Motor neuron (in vitro differentiated cells): ENCODE measurements at regions of chr6 and their contacts with region 1.

Region 1: DNA sequence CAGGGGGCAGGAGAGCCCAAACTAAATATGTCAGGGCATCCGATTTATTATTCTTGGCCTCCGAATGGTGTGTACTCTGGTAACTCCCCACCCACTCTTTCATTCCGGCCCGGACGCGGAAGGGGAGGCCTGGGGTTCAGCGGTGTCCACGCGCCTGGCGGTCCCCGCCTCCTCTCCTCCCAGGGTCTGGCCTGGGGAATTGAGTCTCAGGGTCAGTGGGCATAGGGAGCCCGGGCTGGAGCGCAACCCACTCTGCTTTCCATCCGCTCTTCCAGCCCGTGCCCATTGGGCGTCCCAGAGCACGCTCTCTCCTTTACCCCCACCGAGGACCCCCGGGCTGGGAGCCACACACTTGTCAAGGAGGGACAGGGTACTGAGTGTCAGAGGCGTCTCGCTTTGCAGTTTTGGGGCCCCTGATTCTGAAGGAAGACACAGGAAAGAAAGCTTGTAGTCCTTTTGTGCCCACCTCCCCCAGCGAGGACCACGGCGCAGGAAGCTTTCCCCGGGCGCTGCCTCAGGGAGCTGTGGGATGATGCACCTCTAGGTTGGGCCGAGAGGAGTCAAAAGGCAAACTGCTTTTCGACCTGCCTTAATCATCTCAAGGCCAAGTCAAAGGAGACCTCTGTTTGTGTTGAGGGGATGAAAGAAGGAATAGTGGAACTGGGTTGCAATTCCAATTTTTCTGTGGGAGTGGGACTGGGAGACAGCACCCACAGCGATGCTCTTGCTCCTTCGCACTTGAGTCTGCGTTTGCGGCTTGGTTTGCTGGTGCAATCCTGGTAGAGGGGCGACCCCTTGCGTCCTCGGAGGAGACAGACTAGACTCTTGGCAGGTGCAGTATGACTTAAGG is 2.5 kb downstream of the RSPO3 start:
- ATAC-seq: peak; percentile 75 to 84 (median 81)
- H3K4me3 ChIP-seq: peak overlapping the region; percentile 2 to 55 (median 44)
- H3K27ac ChIP-seq: no peak overlapping the region
- H3K4me1 ChIP-seq: peaks cover 9 to 13% of the 10 kb centered on the region in 2 donors

Region 2: DNA sequence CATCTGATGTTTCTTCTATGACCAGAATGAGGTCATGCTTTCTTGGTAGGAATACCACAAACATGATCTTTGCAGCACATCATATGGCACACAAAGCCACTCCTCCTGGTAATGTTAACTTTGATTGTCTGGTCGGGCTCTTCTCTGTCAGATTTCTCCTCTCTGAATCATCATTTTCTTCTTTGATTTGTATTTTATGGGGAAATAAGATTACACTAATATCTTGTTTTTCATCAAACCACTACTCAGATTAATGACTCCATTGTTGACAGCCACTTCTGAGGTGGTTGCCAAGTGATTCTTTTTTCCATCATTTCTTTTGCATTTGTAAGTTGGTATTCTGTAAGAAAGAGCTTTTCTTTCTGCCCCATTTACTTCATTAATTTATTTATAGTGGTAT is 1105.1 kb before region 1 on chr6:
- in situ Hi-C with region 1: loop called in 1 of 9 experiments (anchors 25 kb)
- ATAC-seq: peak in 7 of 8 experiments; percentile 29 to 76 (median 52)
- H3K4me3 ChIP-seq: no peak overlapping the region
- H3K27ac ChIP-seq: no peak overlapping the region
- H3K4me1 ChIP-seq: peaks cover 5 to 7% of the 10 kb centered on the region in 2 donors

Region 3: GRCh38 chr6:126033696-126034095 is 1087.3 kb before region 1 on chr6:
- in situ Hi-C with region 1: loop called in 1 of 9 experiments (anchors 25 kb)
- ATAC-seq: peak in 7 of 8 experiments; percentile 33 to 99 (median 93)
- H3K4me3 ChIP-seq: no peak overlapping the region
- H3K27ac ChIP-seq: no peak overlapping the region
- H3K4me1 ChIP-seq: no peaks in the 10 kb centered on the region

Region 4: DNA sequence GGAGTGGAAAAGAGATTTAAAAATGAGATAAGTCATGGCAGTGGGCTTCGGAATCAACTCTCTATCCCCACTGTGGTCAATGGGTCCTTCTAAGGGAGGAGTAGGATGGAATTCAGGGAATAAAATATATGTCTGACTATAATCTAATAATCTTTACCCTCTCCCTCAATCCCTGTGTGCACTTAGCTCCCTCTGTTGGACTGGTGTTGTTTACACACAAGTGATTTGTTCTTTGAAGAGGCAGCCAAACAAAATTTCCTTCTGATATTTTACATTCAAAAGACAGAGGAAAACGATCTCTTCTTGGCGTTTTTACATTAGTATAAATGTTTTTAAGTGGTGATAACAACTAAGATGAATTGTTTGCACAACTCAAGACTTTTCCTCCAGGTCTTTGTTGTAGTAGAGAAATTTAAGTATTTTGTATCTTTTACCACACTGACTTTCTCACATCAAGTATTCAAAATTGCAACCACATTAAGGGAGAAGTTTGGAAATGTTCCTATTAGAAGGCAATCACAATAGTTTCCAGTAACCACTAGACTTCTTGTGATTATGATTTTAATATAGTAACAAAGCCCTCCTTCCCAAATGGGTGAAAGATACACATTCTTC is 463.3 kb before region 1 on chr6:
- in situ Hi-C with region 1: loop called in 1 of 9 experiments (anchors 25 kb)
- ATAC-seq: peak in 3 of 8 experiments; percentile 49 to 61 (median 52)
- H3K4me3 ChIP-seq: no peak overlapping the region
- H3K27ac ChIP-seq: no peak overlapping the region
- H3K4me1 ChIP-seq: no peaks in the 10 kb centered on the region

Region 5: GRCh38 chr6:127031511-127031910 is 89.5 kb before region 1 on chr6:
- in situ Hi-C with region 1: no loop called
- ATAC-seq: peak in 2 of 8 experiments; percentile 37 to 43
- H3K4me3 ChIP-seq: no peak overlapping the region
- H3K27ac ChIP-seq: no peak overlapping the region
- H3K4me1 ChIP-seq: no peaks in the 10 kb centered on the region

Region 6: GRCh38 chr6:127051571-127052260 is 69.3 kb before region 1 on chr6:
- in situ Hi-C with region 1: no loop called
- ATAC-seq: peak in 1 of 8 experiments; percentile 65
- H3K4me3 ChIP-seq: no peak overlapping the region
- H3K27ac ChIP-seq: no peak overlapping the region
- H3K4me1 ChIP-seq: no peaks in the 10 kb centered on the region